ENCODE measurements at regions of chr12 and their contacts with region 1.

Region 1: GRCh38 chr12:118372541-118373495 is at the start of gene TAOK3:
- DNase-seq: peak; percentile 98
- ATAC-seq: peak; percentile 97
- total RNA-seq, gene TAOK3: 44.1 TPM

Region 2: GRCh38 chr12:118135788-118136558 is 236.8 kb before region 1 on chr12 and contains the start of gene PEBP1:
- intact Hi-C with region 1: loop called (anchors 10 kb)
- DNase-seq: peak; percentile 98
- ATAC-seq: peak; percentile 99
- total RNA-seq, gene PEBP1: 337 TPM

Region 3: DNA sequence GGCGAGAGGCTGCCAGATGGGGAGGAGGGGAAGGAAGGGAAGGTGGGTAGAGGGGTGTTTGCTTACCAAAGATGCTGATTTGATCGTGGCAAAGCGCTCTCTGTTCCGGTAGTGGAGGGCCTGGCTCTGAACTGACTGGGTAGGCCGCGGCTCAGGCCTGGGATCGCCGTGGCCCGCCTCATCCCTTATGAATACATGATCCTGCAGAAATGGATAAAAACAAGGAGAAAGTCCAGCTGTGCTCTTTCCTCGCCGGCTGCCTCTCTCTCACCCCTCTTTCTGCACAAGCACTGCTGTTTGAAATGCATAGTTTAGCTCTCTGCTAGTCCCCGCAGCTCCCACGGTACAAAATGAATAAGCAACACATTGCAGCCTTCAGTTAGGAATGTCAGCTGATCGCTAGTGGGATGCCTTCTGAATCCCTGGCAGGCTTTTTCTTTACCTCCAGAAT is 183.1 kb before region 1 on chr12:
- intact Hi-C with region 1: loop called (anchors 5 kb)
- DNase-seq: peak; percentile 62
- ATAC-seq: peak; percentile 82

Region 4: DNA sequence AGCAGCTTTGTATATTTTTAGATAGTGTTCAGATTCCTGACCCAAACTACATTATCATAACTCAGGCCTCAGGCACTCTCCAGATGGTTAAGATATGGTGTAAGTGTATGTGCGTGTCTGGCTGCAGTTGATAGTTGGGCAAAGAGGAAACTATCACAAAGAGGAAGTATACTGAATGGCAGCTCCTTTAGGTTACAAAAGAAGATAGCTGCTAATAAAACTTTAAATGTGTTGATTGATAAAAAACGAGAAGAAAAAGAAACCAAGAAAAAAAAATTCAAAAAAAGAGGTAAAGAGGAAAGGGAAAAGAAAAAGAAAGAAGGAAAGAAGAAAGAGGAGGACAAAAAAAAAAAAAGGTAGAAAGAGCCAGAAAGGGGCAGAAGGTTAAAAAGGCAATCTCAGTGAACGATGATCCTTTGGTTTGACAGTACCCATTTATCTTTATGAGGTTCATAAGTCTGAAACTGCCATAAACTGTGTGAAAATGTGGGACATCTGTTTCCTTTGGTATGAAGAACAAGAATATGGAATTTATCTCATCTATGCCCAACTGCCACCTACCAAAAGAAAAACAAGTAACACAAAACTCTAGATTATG is 42.3 kb before region 1 on chr12:
- intact Hi-C with region 1: no loop called
- DNase-seq: no peak
- ATAC-seq: peak; percentile 75

Measured in sciatic nerve (tissue), 2 donors.